Lower leg skin (tissue), 4 donors: ENCODE measurements at regions of chr3 and their contacts with region 1.

Region 1: GRCh38 chr3:143775459-143775858 is 72.8 kb downstream of the SLC9A9 start:
- DNase-seq: no peak
- H3K4me3 ChIP-seq: no peak overlapping the region
- CTCF ChIP-seq: no peak
- POLR2A ChIP-seq: no peak

Region 2: GRCh38 chr3:143595456-143596077 is 179.9 kb before region 1 on chr3:
- intact Hi-C with region 1: no loop called
- DNase-seq: no peak
- H3K4me3 ChIP-seq: no peak overlapping the region
- CTCF ChIP-seq: no peak
- POLR2A ChIP-seq: no peak

Region 3: GRCh38 chr3:143951351-143951971 is 176.0 kb after region 1 on chr3:
- intact Hi-C with region 1: loop called (anchors 10 kb)
- DNase-seq: no peak
- H3K4me3 ChIP-seq: no peak overlapping the region
- CTCF ChIP-seq: no peak
- POLR2A ChIP-seq: no peak